Mammary epithelial cell (primary cell): ENCODE measurements at regions of chr3 and their contacts with region 1.

Region 1: DNA sequence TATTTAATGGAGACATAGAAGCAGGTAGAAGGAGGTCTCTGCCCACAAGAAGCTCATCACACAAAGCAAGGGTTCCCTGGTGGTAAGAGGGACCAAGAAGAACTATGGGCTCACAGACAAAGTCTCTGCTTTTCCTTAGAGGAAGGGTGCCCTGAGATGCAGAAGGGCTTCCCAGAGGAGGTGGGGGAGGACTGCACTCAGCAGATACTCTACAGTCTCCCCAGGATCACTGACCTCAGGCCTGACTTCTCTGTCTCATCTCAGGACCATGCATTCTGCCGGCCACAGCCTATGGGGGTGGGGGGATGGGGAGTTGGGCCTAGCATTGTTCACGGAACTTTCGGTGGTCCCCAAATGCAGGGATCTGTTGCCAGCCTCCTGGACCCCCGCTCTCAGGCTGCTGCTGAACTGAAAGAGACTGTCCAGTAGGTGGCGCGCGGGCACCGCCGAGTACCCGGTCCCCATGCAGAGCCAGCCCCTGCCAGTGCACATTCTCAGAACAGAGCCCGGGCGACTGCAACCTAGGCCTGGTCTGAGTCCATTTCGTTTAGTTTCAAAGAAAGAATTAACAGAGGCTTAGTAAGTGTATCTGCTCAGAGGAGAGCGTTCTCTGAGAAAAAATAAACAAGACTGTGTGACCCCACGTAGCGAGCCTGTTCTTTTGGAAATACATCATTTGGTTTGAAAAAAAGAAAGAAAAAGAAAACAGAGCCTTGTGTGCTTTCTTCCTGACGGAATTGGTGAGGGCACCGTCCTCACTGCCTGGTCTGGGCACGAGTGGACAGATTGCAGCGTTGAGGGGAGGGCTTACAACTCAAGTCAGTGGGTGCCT is 74.1 kb downstream of the LRTM1 start:
- DNase-seq: no peak
- H3K4me3 ChIP-seq: no peak overlapping the region
- H3K27ac ChIP-seq: no peak overlapping the region
- H3K4me1 ChIP-seq: peaks cover 15% of the 10 kb centered on the region
- H3K27me3 ChIP-seq: peaks cover 5% of the 10 kb centered on the region
- CTCF ChIP-seq: peak; percentile 77 to 82

Region 2: DNA sequence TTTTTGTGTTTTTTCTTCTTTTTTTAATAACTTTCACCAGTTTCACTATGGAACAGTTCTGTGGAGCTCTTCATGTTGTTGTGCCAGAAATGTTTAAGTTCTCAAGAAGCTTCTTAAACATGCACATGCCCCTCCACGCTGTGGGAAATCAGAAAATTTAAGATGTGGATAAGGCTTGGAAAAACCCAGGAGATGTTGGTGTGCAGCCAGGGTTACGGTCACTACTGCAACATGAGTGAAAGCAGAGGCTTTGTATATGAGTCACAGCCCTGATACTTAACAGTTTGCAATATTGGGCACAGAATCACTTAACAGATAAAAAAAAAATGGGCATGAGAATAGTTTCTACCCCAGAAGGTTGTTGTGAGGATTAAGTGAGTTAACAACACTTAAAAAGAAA is 325.8 kb before region 1 on chr3:
- CTCF ChIA-PET with region 1: no interaction called
- dilution Hi-C with region 1: no loop called
- in situ Hi-C with region 1: no loop called
- intact Hi-C with region 1: loop called (anchors 10 kb)
- DNase-seq: peak; percentile 54
- H3K4me3 ChIP-seq: no peak overlapping the region
- H3K27ac ChIP-seq: no peak overlapping the region
- H3K4me1 ChIP-seq: no peaks in the 10 kb centered on the region
- H3K27me3 ChIP-seq: no peaks in the 10 kb centered on the region
- CTCF ChIP-seq: no peak

Region 3: GRCh38 chr3:54830658-54831057 is 23.1 kb before region 1 on chr3:
- CTCF ChIA-PET with region 1: no interaction called
- dilution Hi-C with region 1: no loop called
- in situ Hi-C with region 1: no loop called
- intact Hi-C with region 1: no loop called
- DNase-seq: no peak
- H3K4me3 ChIP-seq: no peak overlapping the region
- H3K27ac ChIP-seq: no peak overlapping the region
- H3K4me1 ChIP-seq: peaks cover 10% of the 10 kb centered on the region
- H3K27me3 ChIP-seq: no peaks in the 10 kb centered on the region
- CTCF ChIP-seq: peak; percentile 60 to 81

Region 4: GRCh38 chr3:55180936-55181535 is 327.2 kb after region 1 on chr3:
- CTCF ChIA-PET with region 1: no interaction called
- dilution Hi-C with region 1: no loop called
- in situ Hi-C with region 1: loop called in 1 of 2 experiments (anchors 25 kb)
- intact Hi-C with region 1: loop called (anchors 1 kb)
- DNase-seq: no peak
- H3K4me3 ChIP-seq: no peak overlapping the region
- H3K27ac ChIP-seq: no peak overlapping the region
- H3K4me1 ChIP-seq: no peaks in the 10 kb centered on the region
- H3K27me3 ChIP-seq: no peaks in the 10 kb centered on the region
- CTCF ChIP-seq: peak; percentile 69 to 75

Region 5: GRCh38 chr3:55746808-55747413 is 893.1 kb after region 1 on chr3:
- CTCF ChIA-PET with region 1: no interaction called
- dilution Hi-C with region 1: no loop called
- in situ Hi-C with region 1: loop called in 1 of 2 experiments (anchors 25 kb)
- intact Hi-C with region 1: no loop called
- DNase-seq: no peak
- H3K4me3 ChIP-seq: no peak overlapping the region
- H3K27ac ChIP-seq: no peak overlapping the region
- H3K4me1 ChIP-seq: peaks cover 11% of the 10 kb centered on the region
- H3K27me3 ChIP-seq: no peaks in the 10 kb centered on the region
- CTCF ChIP-seq: peak; percentile 35 to 50

Region 6: DNA sequence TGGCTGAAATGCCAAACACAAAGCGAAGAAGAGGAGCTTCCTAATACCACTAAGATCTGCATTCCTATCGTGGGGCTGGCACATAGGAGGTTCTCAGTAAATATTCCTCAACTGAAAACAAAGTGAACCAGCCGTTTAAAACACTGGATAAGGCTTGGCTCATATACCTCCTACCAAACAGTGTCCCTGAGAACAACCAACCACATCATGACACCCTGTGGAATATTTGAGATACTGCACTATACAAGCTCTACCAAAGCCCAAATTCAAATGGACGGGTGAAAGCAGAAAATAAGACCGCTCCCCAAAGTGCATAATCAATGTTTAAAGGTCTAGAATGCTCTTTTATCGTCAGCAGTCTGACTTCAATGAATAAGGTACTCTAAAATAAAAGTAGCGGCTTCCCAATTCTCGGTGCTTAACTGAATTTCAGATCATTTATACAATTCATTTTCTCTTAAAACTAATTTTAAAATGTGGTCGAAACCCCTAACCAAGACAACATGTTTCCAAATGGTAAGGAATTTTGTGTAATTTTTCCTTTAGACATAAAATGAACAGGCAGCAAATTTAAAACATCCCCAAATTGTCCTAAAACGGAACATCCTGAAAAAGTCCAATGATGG is 1188.7 kb after region 1 on chr3:
- CTCF ChIA-PET with region 1: no interaction called
- dilution Hi-C with region 1: no loop called
- in situ Hi-C with region 1: no loop called
- intact Hi-C with region 1: loop called (anchors 5 kb)
- DNase-seq: peak; percentile 16
- H3K4me3 ChIP-seq: no peak overlapping the region
- H3K27ac ChIP-seq: no peak overlapping the region
- H3K4me1 ChIP-seq: no peaks in the 10 kb centered on the region
- H3K27me3 ChIP-seq: no peaks in the 10 kb centered on the region
- CTCF ChIP-seq: peak; percentile 54 to 70